ENCODE measurements at regions of chr20 and their contacts with region 1.

Region 1: DNA sequence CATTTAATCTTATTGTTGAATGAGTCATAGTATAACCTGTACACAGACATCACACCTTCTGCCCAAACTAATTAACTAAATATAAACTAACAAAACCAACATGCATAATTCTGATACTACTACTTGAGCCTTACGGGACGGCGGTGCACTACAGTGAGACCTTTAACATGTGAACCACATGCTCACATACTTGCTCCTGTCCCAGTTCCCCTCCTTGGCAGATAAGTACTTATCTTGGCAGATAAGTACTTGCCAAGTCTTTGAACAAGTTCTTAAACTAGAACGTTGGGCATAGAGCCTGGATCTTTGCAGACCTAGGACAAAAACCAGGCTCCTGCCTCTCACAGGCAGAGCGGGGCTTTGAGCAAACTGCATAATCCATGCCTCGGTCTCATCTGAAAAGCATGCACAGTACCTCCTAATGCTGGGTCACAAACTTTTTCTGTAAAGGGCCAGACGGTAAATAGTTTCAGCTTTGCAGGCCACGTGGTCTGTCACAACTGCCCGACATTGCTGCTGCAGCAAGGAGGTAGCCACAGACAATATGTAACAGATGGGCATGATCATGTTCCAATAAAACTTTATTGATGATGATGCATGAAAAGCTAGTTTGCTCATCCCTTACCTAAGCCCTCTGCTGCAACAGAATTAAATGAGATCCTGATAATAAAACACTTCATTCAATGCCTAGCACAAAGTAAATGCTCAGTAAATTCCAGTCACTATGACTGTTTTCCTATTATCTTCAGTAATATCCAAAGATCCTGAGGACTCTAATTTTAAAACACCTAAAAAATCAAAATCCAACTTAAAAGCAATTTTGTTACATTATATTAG is 22.9 kb downstream of the ZNF217 start:
- DNase-seq: peak in 1 of 2 donors; percentile 6
- H3K4me3 ChIP-seq: no peak overlapping the region
- H3K27ac ChIP-seq: no peak overlapping the region
- H3K4me1 ChIP-seq: no peaks in the 10 kb centered on the region
- H3K27me3 ChIP-seq: no peaks in the 10 kb centered on the region
- CTCF ChIP-seq: no peak
- POLR2A ChIP-seq: no peak

Region 2: GRCh38 chr20:52943185-52943841 is 627.4 kb before region 1 on chr20:
- intact Hi-C with region 1: loop called (anchors 5 kb)
- DNase-seq: no peak
- H3K4me3 ChIP-seq: no peak overlapping the region
- H3K27ac ChIP-seq: no peak overlapping the region
- H3K4me1 ChIP-seq: no peaks in the 10 kb centered on the region
- H3K27me3 ChIP-seq: no peaks in the 10 kb centered on the region
- CTCF ChIP-seq: no peak
- POLR2A ChIP-seq: no peak

Region 3: DNA sequence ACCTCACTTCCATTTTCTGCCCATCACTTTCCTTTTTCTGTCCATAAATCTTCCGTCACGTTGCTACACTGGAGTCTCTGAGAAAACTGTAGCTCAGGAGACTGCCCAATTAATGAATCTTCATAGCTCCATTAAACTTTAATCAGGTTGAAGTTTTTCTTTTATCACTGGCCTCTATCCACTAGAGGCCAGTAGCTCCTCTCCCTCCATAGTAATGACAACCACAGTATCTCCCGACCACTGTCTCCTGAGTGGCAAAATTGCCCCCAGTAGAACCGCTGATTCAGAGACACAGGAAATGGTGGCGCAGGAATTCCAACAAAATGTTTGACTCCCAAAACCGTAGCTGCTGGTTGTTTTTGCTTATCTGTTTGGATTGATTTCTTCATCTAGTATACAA is 886.2 kb after region 1 on chr20:
- intact Hi-C with region 1: no loop called
- DNase-seq: no peak
- H3K4me3 ChIP-seq: no peak overlapping the region
- H3K27ac ChIP-seq: no peak overlapping the region
- H3K4me1 ChIP-seq: no peaks in the 10 kb centered on the region
- H3K27me3 ChIP-seq: no peaks in the 10 kb centered on the region
- CTCF ChIP-seq: no peak
- POLR2A ChIP-seq: no peak